ENCODE measurements at regions of chr2 and their contacts with region 1.

Region 1: GRCh38 chr2:147082850-147083522 is 761.8 kb upstream of the ACVR2A start:
- DNase-seq: peak; percentile 54
- ATAC-seq: peak; percentile 91
- H3K4me3 ChIP-seq: no peak overlapping the region
- H3K27ac ChIP-seq: no peak overlapping the region
- H3K4me1 ChIP-seq: no peaks in the 10 kb centered on the region
- H3K27me3 ChIP-seq: no peaks in the 10 kb centered on the region
- CTCF ChIP-seq: peak; percentile 86 to 94 (median 87); a peak in 5 of 6 replicates
- EP300 ChIP-seq: no peak
- POLR2A ChIP-seq: no peak
- RAD21 ChIP-seq: peak; percentile 95

Region 2: GRCh38 chr2:146709004-146709403 is 374.0 kb before region 1 on chr2:
- CTCF ChIA-PET with region 1: no interaction called
- POLR2A ChIA-PET with region 1: no interaction called
- RAD21 ChIA-PET with region 1: no interaction called
- SMC1A ChIA-PET with region 1: no interaction called
- in situ Hi-C with region 1: no loop called
- intact Hi-C with region 1: no loop called
- DNase-seq: no peak
- ATAC-seq: no peak
- H3K4me3 ChIP-seq: no peak overlapping the region
- H3K27ac ChIP-seq: no peak overlapping the region
- H3K4me1 ChIP-seq: no peaks in the 10 kb centered on the region
- H3K27me3 ChIP-seq: no peaks in the 10 kb centered on the region
- CTCF ChIP-seq: no peak
- EP300 ChIP-seq: no peak
- POLR2A ChIP-seq: no peak
- RAD21 ChIP-seq: no peak

Region 3: DNA sequence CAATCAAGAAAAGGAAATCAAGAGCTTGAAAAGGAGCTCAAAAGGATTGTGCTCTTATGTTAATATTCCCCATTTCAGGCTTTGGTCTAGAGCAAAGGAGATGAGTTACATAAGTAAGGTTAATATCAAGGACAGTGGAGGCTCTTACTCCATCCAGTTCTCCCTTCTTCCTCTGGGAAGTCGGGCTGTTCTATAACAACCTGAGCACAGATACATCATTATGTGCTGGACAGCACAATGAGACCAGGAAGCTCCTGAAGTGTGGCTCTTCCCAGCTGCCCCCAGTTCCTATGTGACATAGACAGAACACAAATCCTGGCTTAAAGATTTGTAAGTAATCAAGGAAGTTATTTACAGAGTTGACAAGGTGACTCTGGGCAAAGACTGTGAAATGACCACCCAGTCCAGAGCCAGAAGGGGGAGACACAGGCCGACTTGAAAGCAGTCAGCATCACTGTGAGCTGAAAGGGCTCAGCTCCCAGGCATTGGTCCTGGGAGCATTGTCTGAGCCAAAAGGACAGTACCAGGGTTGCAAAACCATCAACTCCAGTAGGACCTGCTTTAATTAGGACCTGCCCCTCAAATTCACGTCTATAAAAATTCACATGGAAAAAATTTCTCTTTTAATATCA is 155.8 kb before region 1 on chr2:
- CTCF ChIA-PET with region 1: interaction called, 14 read pairs
- POLR2A ChIA-PET with region 1: no interaction called
- RAD21 ChIA-PET with region 1: interaction called, 9 read pairs
- SMC1A ChIA-PET with region 1: interaction called, 8 read pairs
- in situ Hi-C with region 1: no loop called
- intact Hi-C with region 1: no loop called
- DNase-seq: no peak
- ATAC-seq: peak; percentile 86
- H3K4me3 ChIP-seq: no peak overlapping the region
- H3K27ac ChIP-seq: no peak overlapping the region
- H3K4me1 ChIP-seq: no peaks in the 10 kb centered on the region
- H3K27me3 ChIP-seq: no peaks in the 10 kb centered on the region
- CTCF ChIP-seq: peak; percentile 33 to 71 (median 57); a peak in 5 of 6 replicates
- EP300 ChIP-seq: no peak
- POLR2A ChIP-seq: no peak
- RAD21 ChIP-seq: peak; percentile 67

Region 4: GRCh38 chr2:147017951-147018642 is 64.9 kb before region 1 on chr2:
- CTCF ChIA-PET with region 1: no interaction called
- POLR2A ChIA-PET with region 1: no interaction called
- RAD21 ChIA-PET with region 1: no interaction called
- SMC1A ChIA-PET with region 1: no interaction called
- in situ Hi-C with region 1: no loop called
- intact Hi-C with region 1: no loop called
- DNase-seq: no peak
- ATAC-seq: no peak
- H3K4me3 ChIP-seq: no peak overlapping the region
- H3K27ac ChIP-seq: no peak overlapping the region
- H3K4me1 ChIP-seq: no peaks in the 10 kb centered on the region
- H3K27me3 ChIP-seq: no peaks in the 10 kb centered on the region; a peak in 1 of 4 replicates
- CTCF ChIP-seq: no peak
- EP300 ChIP-seq: no peak
- POLR2A ChIP-seq: no peak
- RAD21 ChIP-seq: no peak

Region 5: DNA sequence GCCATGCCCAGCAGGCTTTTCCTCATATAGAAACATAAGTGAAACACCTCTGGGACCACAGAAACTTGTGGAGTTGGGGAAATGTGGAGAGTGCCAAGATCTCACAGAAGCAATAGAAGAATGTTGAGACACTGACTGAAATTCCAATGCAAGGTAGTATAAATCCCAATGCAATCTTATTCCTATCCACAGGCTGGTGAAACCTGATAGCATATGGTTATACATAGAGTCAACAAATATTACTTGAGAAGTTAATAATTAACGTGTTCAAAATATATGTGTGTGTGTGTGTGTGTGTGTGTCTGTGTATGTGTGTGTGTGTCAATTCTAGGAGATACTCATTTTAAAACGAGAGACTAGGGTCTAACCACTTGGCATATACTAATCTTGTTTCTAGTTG is 14.9 kb before region 1 on chr2:
- CTCF ChIA-PET with region 1: interaction called, 32 read pairs
- POLR2A ChIA-PET with region 1: no interaction called
- RAD21 ChIA-PET with region 1: interaction called, 5 read pairs
- SMC1A ChIA-PET with region 1: interaction called, 4 read pairs
- in situ Hi-C with region 1: no loop called
- intact Hi-C with region 1: no loop called
- DNase-seq: no peak
- ATAC-seq: no peak
- H3K4me3 ChIP-seq: no peak overlapping the region
- H3K27ac ChIP-seq: no peak overlapping the region
- H3K4me1 ChIP-seq: no peaks in the 10 kb centered on the region
- H3K27me3 ChIP-seq: no peaks in the 10 kb centered on the region
- CTCF ChIP-seq: no peak
- EP300 ChIP-seq: no peak
- POLR2A ChIP-seq: no peak
- RAD21 ChIP-seq: no peak

Region 6: GRCh38 chr2:147182260-147182659 is 99.3 kb after region 1 on chr2:
- CTCF ChIA-PET with region 1: no interaction called
- POLR2A ChIA-PET with region 1: no interaction called
- RAD21 ChIA-PET with region 1: interaction called, 3 read pairs
- SMC1A ChIA-PET with region 1: interaction called, 6 read pairs
- in situ Hi-C with region 1: no loop called
- intact Hi-C with region 1: loop called (anchors 5 kb)
- DNase-seq: peak; percentile 84
- ATAC-seq: peak; percentile 92
- H3K4me3 ChIP-seq: no peak overlapping the region
- H3K27ac ChIP-seq: peak overlapping the region; percentile 85
- H3K4me1 ChIP-seq: peaks cover 16% of the 10 kb centered on the region
- H3K27me3 ChIP-seq: no peaks in the 10 kb centered on the region
- CTCF ChIP-seq: no peak
- EP300 ChIP-seq: no peak; a peak in 2 of 4 replicates
- POLR2A ChIP-seq: no peak
- RAD21 ChIP-seq: peak; percentile 18; the same call in 1 of the 2 replicates

Region 7: DNA sequence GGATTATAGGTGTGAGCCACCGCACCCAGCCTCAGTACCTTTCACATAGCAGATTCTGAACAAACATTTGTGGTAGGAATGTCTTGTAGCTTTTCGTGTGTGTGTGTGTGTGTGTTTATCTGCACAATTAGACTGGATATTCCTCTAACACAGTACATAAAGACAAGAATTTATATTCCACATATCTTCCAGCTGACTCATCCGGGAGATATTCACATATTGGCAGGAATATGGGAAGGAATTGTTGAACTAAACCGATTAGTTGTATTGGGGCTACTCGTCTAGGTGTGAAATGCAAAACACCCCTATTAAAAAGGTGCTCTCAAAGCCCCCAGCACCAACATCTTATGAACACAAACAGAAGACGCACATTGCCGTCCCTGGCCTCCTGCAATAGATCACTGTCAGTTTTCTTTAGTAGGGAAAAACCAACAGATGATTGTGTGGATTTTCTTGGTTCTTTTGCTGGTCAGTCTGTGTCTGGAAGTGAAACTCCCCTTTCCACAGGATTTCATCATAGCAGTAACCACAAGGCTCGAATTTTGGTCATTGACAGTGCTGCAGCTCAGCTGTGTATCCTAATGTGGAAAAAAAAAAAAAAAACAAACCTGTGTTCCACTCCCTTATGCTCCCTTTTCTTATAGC is 553.4 kb after region 1 on chr2:
- CTCF ChIA-PET with region 1: no interaction called
- POLR2A ChIA-PET with region 1: no interaction called
- RAD21 ChIA-PET with region 1: no interaction called
- SMC1A ChIA-PET with region 1: no interaction called
- in situ Hi-C with region 1: no loop called
- intact Hi-C with region 1: loop called (anchors 5 kb)
- DNase-seq: no peak
- ATAC-seq: peak; percentile 9
- H3K4me3 ChIP-seq: no peak overlapping the region; the same call in 1 of the 2 replicates
- H3K27ac ChIP-seq: peak overlapping the region; percentile 59
- H3K4me1 ChIP-seq: peaks cover 64% of the 10 kb centered on the region
- H3K27me3 ChIP-seq: no peaks in the 10 kb centered on the region
- CTCF ChIP-seq: no peak
- EP300 ChIP-seq: 0 out of 4 replicates have a peak, but pooled peaks of 1 of the 2 experiments have one; percentile 20
- POLR2A ChIP-seq: no peak
- RAD21 ChIP-seq: no peak

Region 8: GRCh38 chr2:147910990-147911473 is 828.0 kb after region 1 on chr2:
- CTCF ChIA-PET with region 1: interaction called, 140 read pairs
- POLR2A ChIA-PET with region 1: no interaction called
- RAD21 ChIA-PET with region 1: interaction called, 92 read pairs
- SMC1A ChIA-PET with region 1: interaction called, 87 read pairs
- in situ Hi-C with region 1: loop called (anchors 5 kb)
- intact Hi-C with region 1: loop called (anchors 1 kb)
- DNase-seq: peak; percentile 21
- ATAC-seq: peak; percentile 65
- H3K4me3 ChIP-seq: no peak overlapping the region
- H3K27ac ChIP-seq: no peak overlapping the region
- H3K4me1 ChIP-seq: no peaks in the 10 kb centered on the region; the same call in 1 of the 2 replicates
- H3K27me3 ChIP-seq: no peaks in the 10 kb centered on the region
- CTCF ChIP-seq: peak; percentile 48 to 73 (median 50); a peak in 5 of 6 replicates
- EP300 ChIP-seq: no peak
- POLR2A ChIP-seq: no peak
- RAD21 ChIP-seq: peak; percentile 92